ENCODE measurements at regions of chr7 and their contacts with region 1.

Region 1: DNA sequence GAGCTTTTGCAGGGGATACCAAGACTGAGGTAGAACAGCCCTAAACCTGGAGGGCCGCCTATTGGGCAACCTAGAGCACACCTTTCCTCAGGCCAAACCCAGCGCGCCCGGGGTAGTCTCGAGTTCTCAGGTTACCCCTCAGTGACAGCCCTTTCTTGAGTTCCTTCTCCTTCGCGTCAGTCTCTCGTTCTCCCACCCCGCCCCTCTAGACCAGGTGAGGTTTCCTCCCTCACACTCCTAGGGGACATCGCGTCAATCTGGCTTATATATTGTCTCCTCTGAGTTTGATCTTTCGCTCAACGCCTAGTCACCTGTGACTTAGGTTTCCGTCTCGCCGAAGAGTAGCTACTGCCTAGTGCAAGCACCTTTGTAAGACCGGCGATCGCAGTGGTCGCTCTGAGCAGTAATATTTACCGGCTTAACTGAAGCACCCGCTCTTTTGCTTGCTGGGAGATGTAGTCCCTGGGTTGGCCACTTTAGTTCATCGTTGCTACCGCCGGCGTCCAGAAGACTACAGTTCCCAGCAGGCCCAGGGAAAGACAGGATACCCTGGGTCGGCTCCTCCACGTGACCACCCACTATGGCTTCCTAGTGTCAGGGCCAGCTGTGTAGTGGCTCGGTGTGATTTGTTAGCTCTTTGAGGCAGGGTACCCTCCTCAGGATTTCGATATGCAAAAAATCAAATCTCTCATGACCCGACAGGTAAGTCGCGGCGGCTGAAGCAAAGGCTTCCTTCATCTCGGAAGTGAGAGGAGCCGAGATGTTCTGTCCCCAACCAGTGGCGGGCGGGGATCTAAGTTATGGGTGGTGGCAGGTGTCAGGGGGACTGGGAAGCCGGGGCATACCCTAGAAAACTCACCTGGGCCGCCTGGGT is at the start of gene VPS50:
- DNase-seq: peak; percentile 99
- H3K4me3 ChIP-seq: peak within 1 kb of the TSS; percentile 82 to 91 (median 90)
- H3K27ac ChIP-seq: peak within 1 kb of the TSS; percentile 16
- H3K4me1 ChIP-seq: peaks cover 14% of the 10 kb centered on the region
- H3K27me3 ChIP-seq: peaks cover 0 to 8% of the 10 kb centered on the region in 2 experiments
- CTCF ChIP-seq: no peak
- POLR2A ChIP-seq: peak; percentile 35
- total RNA-seq, gene VPS50: 23.9 and 25.6 TPM in 2 replicates

Region 2: GRCh38 chr7:92528188-92528957 is 703.7 kb before region 1 on chr7 and contains the starts of genes PEX1 and RBM48:
- CTCF ChIA-PET with region 1: no interaction called
- POLR2A ChIA-PET with region 1: no interaction called
- dilution Hi-C with region 1: no loop called
- intact Hi-C with region 1: loop called (anchors 2 kb)
- DNase-seq: peak; percentile 100
- H3K4me3 ChIP-seq: peak within 1 kb of the TSS; percentile 88 to 100 (median 95)
- H3K27ac ChIP-seq: peak within 1 kb of the TSS; percentile 91
- H3K4me1 ChIP-seq: peaks cover 15% of the 10 kb centered on the region
- H3K27me3 ChIP-seq: no peaks in the 10 kb centered on the region
- CTCF ChIP-seq: peak; percentile 34 to 50
- POLR2A ChIP-seq: peak; percentile 70
- total RNA-seq, gene PEX1: 10.7 and 11.7 TPM in 2 replicates
- total RNA-seq, gene RBM48: 12.0 and 13.1 TPM in 2 replicates

Region 3: DNA sequence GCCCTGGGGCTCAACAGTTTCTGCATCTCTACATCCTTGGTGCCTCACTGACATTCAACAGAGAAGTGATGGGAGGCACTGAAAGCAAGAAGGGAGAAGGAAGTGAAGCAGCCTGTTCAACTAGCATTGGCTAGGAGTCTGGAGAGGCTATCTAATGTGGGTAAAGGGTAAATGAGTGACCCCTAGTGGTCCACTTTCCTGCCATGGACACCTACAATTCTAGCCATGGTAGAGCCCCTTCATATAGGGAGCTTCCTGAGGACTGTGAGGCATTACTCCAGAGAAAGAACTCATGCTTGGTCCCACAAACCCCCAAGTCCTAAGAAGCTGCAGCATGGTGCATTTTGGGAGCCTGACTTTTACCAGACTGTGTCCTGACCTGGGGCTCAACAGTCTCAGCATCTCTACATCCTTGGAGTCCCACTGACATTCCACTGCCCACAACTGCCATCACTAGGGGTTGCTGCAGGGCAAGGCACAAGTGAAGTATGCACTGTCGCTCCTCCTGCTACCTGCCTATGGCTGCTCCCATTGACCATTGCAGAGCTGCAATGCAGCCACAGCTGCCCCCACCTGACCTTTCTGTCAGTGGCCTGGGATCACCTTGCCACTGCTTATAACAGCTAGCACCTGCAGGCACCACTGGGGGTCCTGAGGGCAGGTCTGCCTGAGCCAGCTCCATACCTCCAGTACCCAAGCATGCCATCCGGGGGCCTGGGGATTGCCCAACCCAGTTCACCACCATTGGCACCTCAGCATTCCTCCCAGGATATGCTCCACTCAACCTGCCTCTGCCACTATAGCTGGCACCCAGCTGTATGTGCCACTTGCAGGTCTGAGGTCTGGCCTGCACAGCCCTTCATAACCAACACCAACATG is 351.6 kb before region 1 on chr7:
- CTCF ChIA-PET with region 1: no interaction called
- POLR2A ChIA-PET with region 1: no interaction called
- dilution Hi-C with region 1: no loop called
- intact Hi-C with region 1: loop called (anchors 10 kb)
- DNase-seq: peak; percentile 20
- H3K4me3 ChIP-seq: no peak overlapping the region
- H3K27ac ChIP-seq: no peak overlapping the region
- H3K4me1 ChIP-seq: no peaks in the 10 kb centered on the region
- H3K27me3 ChIP-seq: no peaks in the 10 kb centered on the region
- CTCF ChIP-seq: peak in 1 of 2 donors; percentile 16
- POLR2A ChIP-seq: no peak

Region 4: DNA sequence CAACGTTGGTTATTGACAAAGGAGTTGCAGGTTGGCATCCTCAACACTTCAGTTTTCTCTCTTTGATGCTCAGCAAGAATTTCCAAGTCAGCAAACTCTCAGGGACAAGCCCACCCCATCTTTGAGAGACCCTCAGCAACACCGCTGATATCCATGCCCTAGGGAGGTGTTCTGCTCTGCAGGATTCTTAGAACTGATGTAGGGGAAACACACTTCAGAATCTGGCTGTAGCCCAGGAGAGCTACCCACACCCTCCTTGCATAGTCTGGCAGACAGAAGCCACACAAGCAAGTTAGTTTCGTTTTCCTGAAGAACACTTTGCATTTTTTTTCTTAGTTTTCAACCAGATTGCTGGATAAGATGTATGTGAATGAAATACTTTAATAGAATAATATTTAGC is 84.7 kb before region 1 on chr7:
- CTCF ChIA-PET with region 1: interaction called, 3 read pairs
- POLR2A ChIA-PET with region 1: no interaction called
- dilution Hi-C with region 1: no loop called
- intact Hi-C with region 1: loop called (anchors 1 kb)
- DNase-seq: peak; percentile 76
- H3K4me3 ChIP-seq: peak overlapping the region; percentile 30 to 89 (median 71)
- H3K27ac ChIP-seq: peak overlapping the region; percentile 50
- H3K4me1 ChIP-seq: peaks cover 20% of the 10 kb centered on the region
- H3K27me3 ChIP-seq: no peaks in the 10 kb centered on the region
- CTCF ChIP-seq: no peak
- POLR2A ChIP-seq: no peak

Region 5: DNA sequence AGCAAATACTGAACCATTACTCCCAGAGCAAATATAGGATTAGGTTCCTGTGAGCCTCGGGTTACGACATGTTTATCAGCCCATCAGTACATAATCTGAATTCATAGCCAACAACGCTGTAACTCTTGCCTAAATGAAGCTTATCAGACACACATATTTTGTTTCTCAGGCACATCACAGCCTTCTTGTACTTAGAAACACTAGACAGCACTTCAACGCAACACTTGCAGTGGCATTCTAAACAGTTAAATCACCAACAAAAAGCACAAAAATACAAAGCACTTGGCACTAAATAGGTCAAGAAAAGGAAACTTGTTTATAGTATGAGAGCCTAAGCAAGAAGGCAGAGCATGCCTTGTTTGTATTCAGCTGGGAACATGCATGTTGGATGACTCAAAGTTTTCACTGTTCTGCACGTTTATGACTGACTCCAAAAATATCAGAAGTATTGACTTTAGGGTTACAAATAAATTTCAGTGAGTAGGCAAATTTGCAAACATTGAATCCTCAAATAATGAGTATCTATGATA is 75.2 kb after region 1 on chr7:
- CTCF ChIA-PET with region 1: no interaction called
- POLR2A ChIA-PET with region 1: no interaction called
- dilution Hi-C with region 1: no loop called
- intact Hi-C with region 1: no loop called
- DNase-seq: no peak
- H3K4me3 ChIP-seq: no peak overlapping the region
- H3K27ac ChIP-seq: no peak overlapping the region
- H3K4me1 ChIP-seq: no peaks in the 10 kb centered on the region
- H3K27me3 ChIP-seq: no peaks in the 10 kb centered on the region
- CTCF ChIP-seq: no peak
- POLR2A ChIP-seq: no peak

Region 6: GRCh38 chr7:93538076-93538475 is 306.0 kb after region 1 on chr7:
- CTCF ChIA-PET with region 1: no interaction called
- POLR2A ChIA-PET with region 1: no interaction called
- dilution Hi-C with region 1: no loop called
- intact Hi-C with region 1: no loop called
- DNase-seq: no peak
- H3K4me3 ChIP-seq: no peak overlapping the region
- H3K27ac ChIP-seq: no peak overlapping the region
- H3K4me1 ChIP-seq: no peaks in the 10 kb centered on the region
- H3K27me3 ChIP-seq: no peaks in the 10 kb centered on the region
- CTCF ChIP-seq: no peak
- POLR2A ChIP-seq: no peak

Region 7: GRCh38 chr7:93551063-93551904 is 319.2 kb after region 1 on chr7:
- CTCF ChIA-PET with region 1: interaction called, 10 read pairs
- POLR2A ChIA-PET with region 1: no interaction called
- dilution Hi-C with region 1: no loop called
- intact Hi-C with region 1: no loop called
- DNase-seq: peak; percentile 54
- H3K4me3 ChIP-seq: no peak overlapping the region
- H3K27ac ChIP-seq: no peak overlapping the region
- H3K4me1 ChIP-seq: no peaks in the 10 kb centered on the region
- H3K27me3 ChIP-seq: peaks cover 4 to 6% of the 10 kb centered on the region in 2 experiments
- CTCF ChIP-seq: peak; percentile 44 to 52
- POLR2A ChIP-seq: no peak